Upper lobe of right lung (tissue), 1 donor: ENCODE measurements at regions of chr17 and their contacts with region 1.

Region 1: DNA sequence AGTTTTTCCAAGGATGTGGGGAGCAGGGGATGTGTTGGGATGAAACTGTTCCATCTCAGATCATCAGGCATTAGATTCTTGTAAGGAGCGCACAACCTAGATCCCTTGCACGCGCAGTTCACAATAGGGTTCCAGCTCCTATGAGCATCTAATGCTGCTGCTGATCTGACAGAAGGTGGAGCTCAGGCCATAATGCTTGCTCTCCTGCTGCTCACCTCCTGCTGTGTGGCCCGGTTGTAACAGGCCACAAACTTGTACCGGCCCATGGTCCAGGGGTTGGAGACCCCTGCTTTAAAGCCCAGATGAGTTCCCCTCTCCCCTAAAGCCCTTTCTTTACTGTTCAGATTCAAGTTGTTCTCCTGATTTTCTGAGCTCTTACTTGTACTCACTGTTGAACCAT is 44.8 kb downstream of the RNF135 start:
- DNase-seq: no peak
- ATAC-seq: no peak
- H3K4me3 ChIP-seq: no peak overlapping the region
- H3K27ac ChIP-seq: no peak overlapping the region
- H3K4me1 ChIP-seq: no peaks in the 10 kb centered on the region
- H3K27me3 ChIP-seq: no peaks in the 10 kb centered on the region
- CTCF ChIP-seq: no peak

Region 2: DNA sequence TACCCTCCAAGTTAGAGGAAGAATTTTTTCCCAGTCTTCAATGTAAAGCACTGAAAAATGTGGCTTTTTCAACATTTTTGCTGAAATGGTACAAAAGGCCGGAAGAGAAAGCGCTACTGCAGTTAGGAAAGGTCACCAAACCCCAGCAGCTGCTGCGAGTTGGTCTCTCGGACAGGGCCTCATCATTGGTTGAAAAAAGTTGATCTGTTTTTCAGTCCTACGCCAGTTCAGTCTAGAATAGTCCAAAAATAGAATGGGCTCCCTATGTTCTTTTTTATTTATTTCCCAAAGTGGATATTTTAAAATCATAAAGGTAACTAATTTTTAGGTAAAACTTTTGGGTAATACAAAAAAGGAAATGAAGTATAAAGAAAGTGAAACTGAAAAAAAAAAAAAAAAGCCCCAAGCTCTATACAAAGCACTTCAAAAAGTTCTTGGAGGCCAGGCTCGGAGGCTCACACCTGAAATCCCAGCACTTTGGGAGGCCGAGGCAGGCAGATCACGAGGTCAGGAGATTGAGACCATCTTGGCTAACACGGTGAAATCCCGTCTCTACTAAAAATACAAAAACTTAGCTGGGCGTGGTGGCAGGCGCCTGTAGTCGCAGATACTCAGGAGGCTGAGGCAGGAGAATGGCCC is 76.5 kb before region 1 on chr17:
- intact Hi-C with region 1: no loop called
- DNase-seq: no peak
- ATAC-seq: no peak
- H3K4me3 ChIP-seq: no peak overlapping the region
- H3K27ac ChIP-seq: peak overlapping the region; percentile 14
- H3K4me1 ChIP-seq: no peaks in the 10 kb centered on the region
- H3K27me3 ChIP-seq: no peaks in the 10 kb centered on the region
- CTCF ChIP-seq: no peak

Region 3: GRCh38 chr17:31216053-31216751 is 200.6 kb after region 1 on chr17:
- intact Hi-C with region 1: loop called (anchors 10 kb)
- DNase-seq: no peak
- ATAC-seq: no peak
- H3K4me3 ChIP-seq: no peak overlapping the region
- H3K27ac ChIP-seq: no peak overlapping the region
- H3K4me1 ChIP-seq: no peaks in the 10 kb centered on the region
- H3K27me3 ChIP-seq: no peaks in the 10 kb centered on the region
- CTCF ChIP-seq: peak; percentile 66